PC-3 (cell line): ENCODE measurements at regions of chr22 and their contacts with region 1.

Region 1: GRCh38 chr22:42863349-42863961 is 6.4 kb upstream of the ARFGAP3 start:
- DNase-seq: peak; percentile 72
- ATAC-seq: peak; percentile 42
- H3K4me3 ChIP-seq: no peak overlapping the region
- H3K27ac ChIP-seq: peak overlapping the region; percentile 95
- H3K4me1 ChIP-seq: peaks cover 26% of the 10 kb centered on the region
- H3K27me3 ChIP-seq: no peaks in the 10 kb centered on the region
- CTCF ChIP-seq: no peak

Region 2: GRCh38 chr22:42780070-42780540 is 83.3 kb before region 1 on chr22:
- CTCF ChIA-PET with region 1: no interaction called
- POLR2A ChIA-PET with region 1: no interaction called
- intact Hi-C with region 1: loop called (anchors 1 kb)
- DNase-seq: peak; percentile 82
- ATAC-seq: peak; percentile 75
- H3K4me3 ChIP-seq: no peak overlapping the region
- H3K27ac ChIP-seq: no peak overlapping the region
- H3K4me1 ChIP-seq: no peaks in the 10 kb centered on the region
- H3K27me3 ChIP-seq: no peaks in the 10 kb centered on the region
- CTCF ChIP-seq: peak; percentile 74

Region 3: GRCh38 chr22:42844756-42845155 is 18.7 kb before region 1 on chr22:
- CTCF ChIA-PET with region 1: interaction called, 8 read pairs
- POLR2A ChIA-PET with region 1: interaction called, 18 read pairs
- intact Hi-C with region 1: no loop called
- DNase-seq: peak; percentile 93
- ATAC-seq: peak; percentile 97
- H3K4me3 ChIP-seq: peak overlapping the region; percentile 26; the same call in 1 of the 2 replicates
- H3K27ac ChIP-seq: peak overlapping the region; percentile 81
- H3K4me1 ChIP-seq: peaks cover 29% of the 10 kb centered on the region
- H3K27me3 ChIP-seq: no peaks in the 10 kb centered on the region
- CTCF ChIP-seq: no peak

Region 4: GRCh38 chr22:42994881-42995562 is 131.6 kb after region 1 on chr22:
- CTCF ChIA-PET with region 1: interaction called, 21 read pairs
- POLR2A ChIA-PET with region 1: no interaction called
- intact Hi-C with region 1: no loop called
- DNase-seq: peak; percentile 94
- ATAC-seq: peak; percentile 90
- H3K4me3 ChIP-seq: peak overlapping the region; percentile 54
- H3K27ac ChIP-seq: peak overlapping the region; percentile 88
- H3K4me1 ChIP-seq: peaks cover 51% of the 10 kb centered on the region
- H3K27me3 ChIP-seq: no peaks in the 10 kb centered on the region
- CTCF ChIP-seq: no peak

Region 5: GRCh38 chr22:43066844-43067385 is 203.5 kb after region 1 on chr22:
- CTCF ChIA-PET with region 1: interaction called, 14 read pairs
- POLR2A ChIA-PET with region 1: no interaction called
- intact Hi-C with region 1: no loop called
- DNase-seq: peak; percentile 75
- ATAC-seq: peak; percentile 78
- H3K4me3 ChIP-seq: peak overlapping the region; percentile 41; the same call in 1 of the 2 replicates
- H3K27ac ChIP-seq: peak overlapping the region; percentile 100
- H3K4me1 ChIP-seq: peaks cover 8% of the 10 kb centered on the region
- H3K27me3 ChIP-seq: no peaks in the 10 kb centered on the region
- CTCF ChIP-seq: no peak

Region 6: DNA sequence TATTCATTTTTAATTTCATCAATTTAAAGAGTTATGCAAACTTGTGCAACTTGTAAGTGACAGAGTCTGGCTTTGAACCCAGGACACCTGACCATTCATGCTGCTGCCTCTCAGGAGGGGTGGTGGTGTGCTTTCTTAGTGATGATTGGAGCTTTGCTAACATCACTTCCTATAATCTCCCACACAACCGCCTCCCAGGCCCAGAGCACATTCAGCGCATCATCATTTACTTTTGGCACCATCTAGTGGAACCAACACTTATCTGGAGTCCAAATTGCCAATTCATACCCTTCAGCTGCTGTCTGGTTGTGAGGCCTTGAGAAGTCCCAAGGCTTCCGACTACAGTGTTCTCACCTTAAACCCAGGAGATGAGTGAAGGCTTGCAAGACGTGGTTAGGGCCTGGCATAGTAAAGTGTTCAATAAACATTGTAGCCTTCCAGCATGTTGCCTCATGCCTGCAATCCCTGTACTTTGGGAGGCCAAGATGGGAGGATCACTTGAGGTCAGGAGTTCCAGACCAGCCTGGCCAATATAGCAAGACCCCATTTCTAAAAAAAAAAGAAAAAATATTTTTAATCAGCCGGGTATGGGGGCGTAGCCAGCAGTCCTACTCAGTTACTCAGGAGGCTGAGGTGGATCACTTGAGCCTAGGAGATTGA is 226.8 kb after region 1 on chr22:
- CTCF ChIA-PET with region 1: interaction called, 7 read pairs
- POLR2A ChIA-PET with region 1: no interaction called
- intact Hi-C with region 1: loop called (anchors 10 kb)
- DNase-seq: peak; percentile 84
- ATAC-seq: peak; percentile 41
- H3K4me3 ChIP-seq: no peak overlapping the region
- H3K27ac ChIP-seq: no peak overlapping the region
- H3K4me1 ChIP-seq: peaks cover 9% of the 10 kb centered on the region
- H3K27me3 ChIP-seq: no peaks in the 10 kb centered on the region
- CTCF ChIP-seq: peak; percentile 70